Mucosa of descending colon (tissue), 3 donors: ENCODE measurements at regions of chr6 and their contacts with region 1.

Region 1: DNA sequence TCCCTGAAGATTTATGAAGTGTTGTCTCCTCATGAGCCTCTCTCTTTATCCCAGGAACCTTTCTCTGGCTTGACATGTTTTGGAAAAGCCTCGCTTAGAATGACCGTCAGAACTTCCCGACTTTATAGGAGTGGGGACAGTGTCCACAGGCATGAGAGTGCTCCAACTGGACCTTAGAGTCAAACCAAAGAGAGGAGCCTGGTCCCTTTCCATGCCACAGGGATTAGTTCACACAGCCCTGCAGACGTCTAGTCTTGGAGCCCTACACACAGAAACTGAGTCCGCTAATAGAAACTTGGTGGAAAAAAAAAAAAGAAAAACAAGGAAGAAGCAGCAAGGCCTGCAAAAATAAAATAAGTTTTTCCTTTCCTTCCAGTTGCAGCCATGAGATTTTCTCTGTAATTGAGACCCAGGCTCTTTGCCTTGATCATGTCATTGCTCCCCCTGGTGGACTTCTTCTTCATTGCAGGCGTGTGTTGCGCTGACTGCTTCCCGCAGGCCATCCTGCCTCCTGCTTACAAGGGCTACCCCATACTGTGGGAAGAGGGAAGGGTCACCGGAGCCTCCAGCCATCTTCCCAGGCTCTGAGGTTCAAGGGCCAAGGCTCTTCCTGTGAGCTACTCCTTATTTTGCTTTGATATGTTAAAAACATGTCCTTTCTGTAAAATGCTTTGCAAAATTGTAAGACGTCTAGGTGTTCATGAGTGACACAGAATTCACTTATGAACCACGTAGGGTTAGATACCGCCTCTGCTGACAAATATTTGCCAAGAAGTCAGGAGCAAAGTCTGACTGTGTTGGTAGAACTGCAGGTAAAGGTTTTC is 201.0 kb downstream of the UST start:
- DNase-seq: peak; percentile 62 to 94 (median 81)
- ATAC-seq: peak; percentile 96
- H3K4me3 ChIP-seq: no peak overlapping the region
- H3K4me1 ChIP-seq: no peaks in the 10 kb centered on the region
- CTCF ChIP-seq: peak; percentile 87

Region 2: GRCh38 chr6:148578245-148578732 is 369.5 kb before region 1 on chr6:
- intact Hi-C with region 1: loop called (anchors 5 to 10 kb)
- DNase-seq: peak; percentile 62 to 67 (median 66)
- ATAC-seq: peak; percentile 91
- H3K4me3 ChIP-seq: no peak overlapping the region
- H3K4me1 ChIP-seq: no peaks in the 10 kb centered on the region
- CTCF ChIP-seq: peak; percentile 37

Region 3: DNA sequence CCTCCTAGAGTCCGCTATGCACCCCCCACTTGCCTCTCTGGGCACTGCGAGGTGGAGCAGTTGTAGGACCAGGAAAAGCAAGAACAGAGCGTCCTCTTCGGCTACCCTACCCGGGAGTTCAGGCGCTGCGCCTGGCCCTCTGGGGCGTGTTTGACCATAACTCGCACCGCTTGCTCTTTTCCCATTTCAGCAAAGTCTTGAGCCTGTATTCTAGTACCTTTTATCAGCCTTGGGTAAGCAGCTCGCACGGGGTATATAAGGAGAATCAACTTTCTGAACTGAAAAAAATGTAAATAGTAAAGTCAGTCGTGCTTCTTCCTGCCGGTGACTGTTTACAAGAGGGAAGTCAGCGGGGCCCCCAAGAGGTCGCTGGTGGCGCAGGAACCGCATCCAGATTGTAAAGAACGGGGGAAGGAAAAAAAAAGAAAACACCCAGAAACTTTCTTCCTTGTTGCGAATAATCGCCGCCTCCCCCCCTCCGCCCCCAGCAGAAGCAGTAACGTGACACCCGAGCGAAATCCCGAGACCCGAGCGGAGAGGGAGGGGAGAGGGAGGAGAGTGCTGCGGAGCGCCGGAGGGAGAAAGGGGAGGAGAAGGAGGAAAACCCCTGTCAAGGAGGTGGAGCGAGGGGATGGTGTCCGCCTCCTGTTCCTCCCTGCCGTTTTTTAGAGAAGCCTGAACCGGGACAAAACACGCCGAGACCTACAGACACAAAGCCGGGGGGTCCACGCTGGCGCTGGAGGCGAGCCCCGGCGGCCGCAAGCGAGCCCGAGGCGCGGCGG is 201.3 kb before region 1 on chr6 and contains the start of gene UST:
- intact Hi-C with region 1: loop called (anchors 5 to 10 kb)
- DNase-seq: peak; percentile 69 to 82 (median 71)
- ATAC-seq: peak; percentile 61
- H3K4me3 ChIP-seq: peak within 1 kb of the TSS; percentile 30
- H3K4me1 ChIP-seq: peaks cover 15% of the 10 kb centered on the region
- CTCF ChIP-seq: no peak
- total RNA-seq, gene UST: 1.1 to 16.2 (median 2.1) TPM

Region 4: DNA sequence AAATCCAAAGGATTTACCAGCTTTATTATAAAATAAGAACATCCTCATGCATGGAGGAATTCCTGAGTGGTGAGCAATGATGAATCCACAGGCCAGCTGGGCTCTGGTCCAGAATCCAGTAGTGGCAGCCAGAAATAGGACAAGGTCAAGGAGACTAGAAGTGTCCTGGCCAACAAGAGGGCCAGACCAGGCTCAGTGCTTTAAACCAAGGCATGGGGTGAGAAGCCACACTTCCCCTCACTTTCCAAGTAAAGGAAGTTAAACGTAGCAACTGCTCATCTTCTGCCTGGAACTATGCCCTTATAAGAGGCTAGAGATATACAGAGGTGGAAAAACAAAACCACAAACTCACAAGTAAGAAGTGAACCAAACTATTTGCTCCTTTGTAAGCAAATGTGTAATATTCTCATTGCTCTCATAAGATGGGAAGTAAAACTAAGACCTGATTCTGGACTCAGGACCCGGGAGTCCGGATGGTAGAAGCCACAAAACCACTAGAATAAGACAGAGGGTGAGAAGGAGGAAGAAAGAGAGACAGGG is 52.2 kb after region 1 on chr6:
- intact Hi-C with region 1: no loop called
- DNase-seq: peak in 2 of 3 donors; percentile 34 to 37
- ATAC-seq: peak; percentile 46
- H3K4me3 ChIP-seq: no peak overlapping the region
- H3K4me1 ChIP-seq: peaks cover 4% of the 10 kb centered on the region
- CTCF ChIP-seq: no peak